ENCODE measurements at regions of chr9 and their contacts with region 1.

Region 1: DNA sequence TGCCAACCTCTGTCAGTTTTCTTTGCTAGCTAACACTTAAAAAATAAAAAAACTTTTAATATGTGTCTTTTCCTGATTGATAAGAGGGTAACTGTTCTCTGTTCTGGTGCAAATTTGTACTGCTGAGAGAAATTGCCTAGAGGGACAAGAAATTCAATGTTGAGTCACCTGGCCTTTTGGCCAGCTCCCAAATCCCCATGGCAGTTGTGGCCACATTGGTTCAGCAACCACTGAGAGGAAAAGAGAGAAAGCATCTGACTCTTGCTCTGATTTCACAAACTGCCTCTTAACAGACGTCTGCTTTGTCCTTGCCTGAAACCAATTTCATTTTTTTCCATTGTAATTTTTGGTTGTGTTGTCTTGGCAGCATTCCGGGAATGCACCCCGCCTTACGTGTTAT is 42.4 kb downstream of the NTRK2 start:
- DNase-seq: no peak
- H3K4me3 Mint-ChIP-seq: no peak overlapping the region
- H3K27ac Mint-ChIP-seq: no peak overlapping the region
- H3K4me1 Mint-ChIP-seq: peaks cover 18% of the 10 kb centered on the region
- H3K27me3 Mint-ChIP-seq: peaks cover 7% of the 10 kb centered on the region

Region 2: DNA sequence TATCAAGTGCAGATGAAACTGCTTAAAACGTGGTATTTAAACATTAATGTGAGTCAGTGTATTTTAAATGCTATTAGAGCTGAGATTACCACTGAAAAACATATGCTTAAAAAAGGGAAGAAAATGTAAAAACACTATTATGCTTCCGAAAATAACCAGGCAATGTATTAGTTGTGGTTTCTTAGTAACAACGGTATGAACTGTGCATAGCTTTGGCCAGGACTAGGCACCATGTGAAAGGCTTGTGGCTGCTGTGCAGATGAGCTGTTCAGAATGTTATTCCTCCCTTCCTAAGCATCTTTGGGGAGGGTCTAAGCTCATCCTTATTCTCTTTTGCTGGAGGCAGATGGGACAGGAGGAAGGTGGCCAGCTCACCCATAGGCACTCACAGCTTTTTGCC is 42.6 kb after region 1 on chr9:
- intact Hi-C with region 1: loop called (anchors 5 kb)
- DNase-seq: no peak
- H3K4me3 Mint-ChIP-seq: no peak overlapping the region
- H3K27ac Mint-ChIP-seq: peak overlapping the region; percentile 58
- H3K4me1 Mint-ChIP-seq: peaks cover 31% of the 10 kb centered on the region
- H3K27me3 Mint-ChIP-seq: no peaks in the 10 kb centered on the region

Region 3: DNA sequence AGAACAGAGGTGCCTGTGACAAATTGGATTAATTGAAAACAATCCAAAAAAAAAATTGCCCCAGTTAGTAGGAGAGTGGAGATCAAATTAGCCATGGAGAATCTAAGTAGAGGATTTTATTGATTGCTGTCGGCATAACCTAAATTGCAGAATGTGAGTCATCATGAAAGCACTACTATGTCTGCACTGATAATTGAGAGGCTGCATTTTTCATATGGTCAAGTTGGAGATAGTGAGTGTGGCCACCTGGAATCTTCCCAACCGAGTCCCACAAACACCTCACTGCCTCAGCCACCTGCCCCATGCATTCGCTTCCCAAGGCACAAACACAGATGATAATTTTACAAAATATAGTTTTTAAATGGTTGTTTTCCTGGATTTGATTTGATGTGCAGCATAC is 81.3 kb after region 1 on chr9:
- intact Hi-C with region 1: no loop called
- DNase-seq: no peak
- H3K4me3 Mint-ChIP-seq: no peak overlapping the region
- H3K27ac Mint-ChIP-seq: no peak overlapping the region
- H3K4me1 Mint-ChIP-seq: no peaks in the 10 kb centered on the region
- H3K27me3 Mint-ChIP-seq: no peaks in the 10 kb centered on the region

Measured in activated T-helper 2 cell treated with anti-CD3 and anti-CD28 coated beads, Interferon-gamma antibody, Interleukin-2, Interleukin-4, amounts not matched to agents 10 μg/mL and 5 μg/mL and 100 μg/mL, durations not matched to agents 14 hours and 24 hours and 36 hours (primary cell).